ENCODE measurements at regions of chr17 and their contacts with region 1.

Region 1: DNA sequence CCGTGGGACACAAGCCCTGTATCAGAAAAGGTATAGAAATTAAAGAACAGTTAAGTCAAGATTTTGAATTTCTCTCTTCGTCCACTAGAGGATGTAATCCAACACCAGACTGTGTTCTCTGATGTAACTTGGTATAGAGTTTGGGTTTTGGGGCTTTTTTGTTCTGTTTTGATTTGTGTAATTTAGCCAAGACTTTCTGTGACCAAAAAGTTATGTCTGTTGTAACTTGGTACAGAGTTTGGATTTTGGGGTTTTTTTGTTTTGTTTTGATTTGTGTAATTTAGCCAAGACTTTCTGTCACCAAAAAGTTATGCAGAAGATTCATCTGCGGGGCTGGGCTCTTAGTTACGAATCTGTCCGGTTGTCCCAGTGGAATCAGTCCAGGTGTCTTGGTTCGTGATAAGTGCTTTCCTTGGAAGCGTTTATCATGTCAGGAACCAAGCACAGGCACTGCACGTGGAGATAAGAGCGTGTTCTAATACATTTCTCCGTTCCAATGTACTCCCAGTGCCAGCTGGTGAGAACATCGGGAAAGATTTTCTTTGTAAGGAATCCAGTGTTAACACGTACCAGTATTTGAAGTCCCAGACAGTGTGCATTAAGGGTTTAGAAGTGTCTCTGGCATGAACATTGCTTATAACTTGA is 44.1 kb upstream of the SEC14L1 start:
- DNase-seq: peak; percentile 26
- H3K4me3 ChIP-seq: no peak overlapping the region
- H3K27ac ChIP-seq: no peak overlapping the region
- H3K4me1 ChIP-seq: peaks cover 9% of the 10 kb centered on the region
- H3K27me3 ChIP-seq: no peaks in the 10 kb centered on the region
- CTCF ChIP-seq: peak; percentile 69 to 87

Region 2: DNA sequence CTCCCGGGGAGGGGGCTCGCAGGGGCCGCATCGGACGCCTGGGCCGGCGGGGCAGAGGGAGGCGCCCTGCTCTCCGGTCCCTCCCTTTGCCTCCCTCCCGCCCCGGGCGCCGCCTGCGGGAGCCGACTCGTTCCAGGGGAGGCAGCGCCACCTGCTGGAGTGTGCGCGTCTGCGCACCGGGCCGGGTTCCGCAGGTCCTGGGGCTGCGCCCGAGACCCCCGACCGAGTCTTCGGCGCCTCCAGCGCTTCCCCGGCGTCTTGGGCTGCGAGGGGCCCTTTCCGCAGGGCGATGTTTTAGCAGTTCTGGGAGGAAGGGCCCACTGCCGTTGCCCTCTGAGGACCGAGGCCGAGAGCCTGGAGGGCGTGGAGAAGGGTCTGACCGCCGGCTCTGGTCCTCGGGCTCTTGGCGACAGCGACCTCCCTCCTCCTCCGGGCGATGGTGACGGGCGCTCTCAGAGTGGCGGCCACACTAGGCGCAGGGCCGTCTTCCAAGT is 150.4 kb after region 1 on chr17:
- CTCF ChIA-PET with region 1: interaction called, 3 read pairs
- dilution Hi-C with region 1: no loop called
- in situ Hi-C with region 1: no loop called
- intact Hi-C with region 1: loop called (anchors 1 kb)
- DNase-seq: peak; percentile 47
- H3K4me3 ChIP-seq: peak overlapping the region; percentile 43 to 61 (median 47)
- H3K27ac ChIP-seq: no peak overlapping the region
- H3K4me1 ChIP-seq: peaks cover 8% of the 10 kb centered on the region
- H3K27me3 ChIP-seq: no peaks in the 10 kb centered on the region
- CTCF ChIP-seq: peak; percentile 55 to 88

Measured in mammary epithelial cell (primary cell).